Upper lobe of right lung (tissue), 1 donor: ENCODE measurements at regions of chr10 and their contacts with region 1.

Region 1: DNA sequence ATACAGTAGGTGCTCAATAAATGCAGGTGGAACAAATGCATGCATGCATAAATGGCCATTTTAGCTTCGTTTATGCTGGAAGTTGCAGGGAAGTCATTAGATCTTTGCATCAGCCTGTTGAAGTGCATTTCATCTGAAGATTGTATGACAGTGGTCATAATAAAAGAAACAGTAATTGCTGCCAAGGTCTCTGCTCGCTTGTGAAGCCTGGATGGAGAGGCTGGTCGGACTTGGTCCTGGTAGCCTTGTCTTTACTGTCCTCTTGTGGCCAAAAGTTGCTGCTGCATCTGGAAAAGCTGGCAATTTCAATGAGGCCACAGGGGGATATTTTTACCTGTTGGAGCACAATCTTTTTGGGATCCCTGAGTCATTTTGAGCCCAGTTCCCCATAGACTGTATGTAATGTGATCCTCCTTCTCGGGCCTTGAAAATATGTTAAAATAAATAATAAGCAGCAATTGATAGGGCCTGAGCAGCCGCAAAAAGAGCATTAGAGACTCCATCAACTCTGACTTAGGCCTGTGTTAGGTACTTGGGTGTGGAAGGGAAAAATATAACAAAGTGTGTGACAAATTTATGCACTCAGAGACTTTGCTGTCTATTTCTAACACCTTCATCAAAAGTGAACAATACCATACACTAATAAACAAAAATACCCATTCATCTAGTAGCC is 31.6 kb upstream of the HABP2 start:
- DNase-seq: no peak
- ATAC-seq: peak; percentile 89
- H3K4me3 ChIP-seq: no peak overlapping the region
- H3K27ac ChIP-seq: no peak overlapping the region
- H3K4me1 ChIP-seq: peaks cover 4% of the 10 kb centered on the region
- H3K27me3 ChIP-seq: no peaks in the 10 kb centered on the region
- CTCF ChIP-seq: peak; percentile 97

Region 2: DNA sequence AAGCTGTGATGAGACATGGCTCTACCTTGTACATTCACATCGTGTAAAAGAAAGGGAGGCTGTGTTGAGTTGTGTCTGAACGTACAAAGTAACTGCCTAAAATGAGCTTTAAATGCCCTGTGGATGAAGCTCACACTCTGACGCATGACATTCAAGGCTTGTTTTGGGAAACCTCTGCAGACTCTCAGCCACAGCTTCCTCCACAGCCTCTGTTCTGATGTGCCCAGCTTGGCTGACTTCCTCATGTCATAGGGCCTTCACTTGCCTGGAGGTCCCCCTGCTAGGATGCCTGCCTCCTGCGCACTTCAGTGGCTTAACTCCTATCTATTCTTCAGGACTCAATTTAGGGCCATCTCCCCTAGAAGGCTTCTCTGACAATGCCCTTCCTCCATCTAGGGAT is 198.4 kb before region 1 on chr10:
- intact Hi-C with region 1: no loop called
- DNase-seq: no peak
- ATAC-seq: peak; percentile 85
- H3K4me3 ChIP-seq: no peak overlapping the region
- H3K27ac ChIP-seq: no peak overlapping the region
- H3K4me1 ChIP-seq: no peaks in the 10 kb centered on the region
- H3K27me3 ChIP-seq: no peaks in the 10 kb centered on the region
- CTCF ChIP-seq: no peak

Region 3: DNA sequence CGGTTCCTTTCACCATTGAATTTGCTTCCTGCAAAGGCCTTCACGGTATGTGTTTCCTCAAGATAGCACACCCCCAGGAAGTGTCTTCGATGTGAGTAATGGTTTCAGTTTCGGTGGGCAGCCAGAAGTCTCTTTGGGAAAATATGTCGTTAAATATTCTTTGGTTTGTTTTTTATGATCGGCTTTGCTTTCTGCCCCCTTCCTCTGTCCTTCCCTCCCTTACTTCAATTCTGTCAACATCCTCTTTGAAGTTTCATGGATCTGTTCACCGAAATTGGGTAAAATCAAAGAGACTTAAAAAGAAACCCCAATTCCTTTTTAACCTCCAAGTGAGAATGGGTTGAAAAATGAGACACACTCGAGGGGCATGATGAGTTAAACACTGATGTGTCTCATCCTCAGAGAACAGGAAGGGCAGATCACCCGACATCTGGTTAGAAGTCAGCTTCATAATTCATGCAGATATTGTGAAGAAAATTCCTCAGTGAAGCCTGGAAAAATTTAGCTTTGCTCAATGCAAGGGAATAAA is 139.2 kb before region 1 on chr10:
- intact Hi-C with region 1: loop called (anchors 5 kb)
- DNase-seq: no peak
- ATAC-seq: peak; percentile 46
- H3K4me3 ChIP-seq: peak overlapping the region; percentile 40
- H3K27ac ChIP-seq: peak overlapping the region; percentile 71
- H3K4me1 ChIP-seq: peaks cover 33% of the 10 kb centered on the region
- H3K27me3 ChIP-seq: no peaks in the 10 kb centered on the region
- CTCF ChIP-seq: no peak